PC-3 (cell line): ENCODE measurements at regions of chr3 and their contacts with region 1.

Region 1: DNA sequence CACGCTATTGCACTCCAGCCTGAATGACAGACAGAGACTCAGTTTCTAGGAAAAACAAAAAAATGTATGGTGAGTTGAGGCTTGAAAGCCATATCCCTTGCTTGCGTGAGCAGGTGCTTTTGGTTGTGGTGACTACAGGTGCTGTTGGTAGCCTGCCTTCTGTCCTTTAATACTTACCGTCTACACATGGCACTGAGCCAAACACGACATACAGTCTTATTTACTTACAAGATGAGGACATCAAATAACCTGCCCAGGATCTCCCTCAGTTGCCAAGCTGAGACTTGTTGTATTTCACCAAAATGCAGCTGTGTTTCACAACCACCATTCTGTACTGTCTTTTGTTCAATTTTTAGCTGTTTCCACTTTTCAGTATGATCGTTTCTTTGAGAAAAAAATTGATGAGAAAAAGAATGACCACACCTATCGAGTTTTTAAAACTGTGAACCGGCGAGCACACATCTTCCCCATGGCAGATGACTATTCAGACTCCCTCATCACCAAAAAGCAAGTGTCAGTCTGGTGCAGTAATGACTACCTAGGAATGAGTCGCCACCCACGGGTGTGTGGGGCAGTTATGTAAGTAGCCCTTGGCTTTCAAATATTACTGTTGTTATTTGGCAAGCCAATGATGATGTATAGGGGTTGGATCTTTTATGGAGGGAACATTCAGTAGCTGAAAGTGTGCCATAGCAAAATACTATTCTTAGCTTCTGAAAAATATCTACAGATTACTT is 6.5 kb downstream of the ALAS1 start:
- DNase-seq: peak; percentile 66
- ATAC-seq: peak; percentile 51
- H3K4me3 ChIP-seq: no peak overlapping the region
- H3K27ac ChIP-seq: peak overlapping the region; percentile 88
- H3K4me1 ChIP-seq: peaks cover 45% of the 10 kb centered on the region
- H3K27me3 ChIP-seq: no peaks in the 10 kb centered on the region
- CTCF ChIP-seq: no peak

Region 2: DNA sequence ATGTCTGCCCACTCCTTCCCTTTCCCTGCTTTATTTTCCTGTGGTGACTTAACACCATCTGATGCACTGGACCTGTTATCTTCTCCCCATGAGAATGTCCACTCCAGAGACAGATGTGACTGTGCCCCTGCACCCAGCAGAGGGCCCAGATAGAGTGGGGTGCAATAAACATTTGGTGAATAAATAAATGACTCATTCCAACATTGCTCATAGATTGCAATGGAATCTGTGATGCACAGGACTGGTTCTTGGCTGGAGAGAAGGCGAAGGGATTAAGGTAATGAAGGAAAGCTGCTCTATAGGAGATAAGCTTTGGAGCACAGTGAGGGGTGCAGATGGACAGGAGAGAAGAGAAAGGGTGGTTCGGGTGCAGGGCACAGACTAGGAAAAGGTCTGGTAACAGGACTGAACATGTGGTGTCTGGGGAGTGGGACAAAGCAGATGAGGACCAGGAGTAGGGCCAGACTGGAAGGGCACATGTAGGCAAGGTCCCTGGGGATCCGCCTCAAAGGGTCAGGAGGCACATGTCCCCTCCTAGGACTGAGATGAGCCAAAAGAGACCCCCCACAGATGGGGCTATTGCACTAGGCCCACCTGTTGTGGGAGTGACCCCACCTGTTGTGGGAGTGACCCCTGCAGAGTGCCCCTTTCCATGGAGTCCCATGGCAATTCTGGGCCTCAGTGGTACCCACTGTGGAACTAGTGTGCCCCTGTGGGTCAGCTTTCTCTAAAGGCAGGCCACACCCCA is 32.8 kb before region 1 on chr3:
- CTCF ChIA-PET with region 1: no interaction called
- POLR2A ChIA-PET with region 1: interaction called, 3 read pairs
- intact Hi-C with region 1: loop called (anchors 2 kb)
- DNase-seq: peak; percentile 76
- ATAC-seq: peak; percentile 90
- H3K4me3 ChIP-seq: no peak overlapping the region
- H3K27ac ChIP-seq: peak overlapping the region; percentile 24; the same call in 1 of the 2 replicates
- H3K4me1 ChIP-seq: peaks cover 16% of the 10 kb centered on the region
- H3K27me3 ChIP-seq: no peaks in the 10 kb centered on the region
- CTCF ChIP-seq: peak; percentile 49

Region 3: GRCh38 chr3:52220380-52221026 is 16.0 kb after region 1 on chr3:
- CTCF ChIA-PET with region 1: interaction called, 3 read pairs
- POLR2A ChIA-PET with region 1: interaction called, 11 read pairs
- intact Hi-C with region 1: no loop called
- DNase-seq: peak; percentile 93
- ATAC-seq: peak; percentile 45
- H3K4me3 ChIP-seq: no peak overlapping the region
- H3K27ac ChIP-seq: 0 out of 2 replicates have a peak overlapping the region, but pooled peaks have one; percentile 13
- H3K4me1 ChIP-seq: peaks cover 49% of the 10 kb centered on the region
- H3K27me3 ChIP-seq: no peaks in the 10 kb centered on the region
- CTCF ChIP-seq: peak; percentile 94

Region 4: GRCh38 chr3:52238761-52239701 is 34.5 kb after region 1 on chr3 and contains the start of gene TWF2:
- CTCF ChIA-PET with region 1: no interaction called
- POLR2A ChIA-PET with region 1: interaction called, 20 read pairs
- intact Hi-C with region 1: no loop called
- DNase-seq: peak; percentile 86
- ATAC-seq: peak; percentile 64
- H3K4me3 ChIP-seq: peak within 1 kb of the TSS; percentile 97
- H3K27ac ChIP-seq: peak within 1 kb of the TSS; percentile 93
- H3K4me1 ChIP-seq: peaks cover 39% of the 10 kb centered on the region
- H3K27me3 ChIP-seq: no peaks in the 10 kb centered on the region
- CTCF ChIP-seq: peak; percentile 37; the same call in 1 of the 2 replicates
- total RNA-seq, gene TWF2: 147 and 166 TPM in 2 replicates